ENCODE measurements at regions of chr1 and their contacts with region 1.

Region 1: GRCh38 chr1:203504397-203505250 is 10.7 kb downstream of the OPTC start:
- DNase-seq: peak; percentile 79
- H3K4me3 Mint-ChIP-seq: no peak overlapping the region
- H3K27ac Mint-ChIP-seq: no peak overlapping the region
- H3K4me1 Mint-ChIP-seq: no peaks in the 10 kb centered on the region
- H3K27me3 Mint-ChIP-seq: peaks cover 15% of the 10 kb centered on the region

Region 2: GRCh38 chr1:203486618-203487370 is 17.8 kb before region 1 on chr1:
- CTCF ChIA-PET with region 1: interaction called, 14 read pairs
- POLR2A ChIA-PET with region 1: no interaction called
- DNase-seq: no peak
- H3K4me3 Mint-ChIP-seq: peak overlapping the region; percentile 57
- H3K27ac Mint-ChIP-seq: peak overlapping the region; percentile 46
- H3K4me1 Mint-ChIP-seq: peaks cover 9% of the 10 kb centered on the region
- H3K27me3 Mint-ChIP-seq: peaks cover 9% of the 10 kb centered on the region

Region 3: GRCh38 chr1:203702130-203702577 is 197.5 kb after region 1 on chr1:
- CTCF ChIA-PET with region 1: interaction called, 68 read pairs
- POLR2A ChIA-PET with region 1: no interaction called
- DNase-seq: peak; percentile 65
- H3K4me3 Mint-ChIP-seq: no peak overlapping the region
- H3K27ac Mint-ChIP-seq: peak overlapping the region; percentile 10
- H3K4me1 Mint-ChIP-seq: peaks cover 22% of the 10 kb centered on the region
- H3K27me3 Mint-ChIP-seq: no peaks in the 10 kb centered on the region